Lower lobe of right lung (tissue), 2 donors: ENCODE measurements at regions of chr5 and their contacts with region 1.

Region 1: DNA sequence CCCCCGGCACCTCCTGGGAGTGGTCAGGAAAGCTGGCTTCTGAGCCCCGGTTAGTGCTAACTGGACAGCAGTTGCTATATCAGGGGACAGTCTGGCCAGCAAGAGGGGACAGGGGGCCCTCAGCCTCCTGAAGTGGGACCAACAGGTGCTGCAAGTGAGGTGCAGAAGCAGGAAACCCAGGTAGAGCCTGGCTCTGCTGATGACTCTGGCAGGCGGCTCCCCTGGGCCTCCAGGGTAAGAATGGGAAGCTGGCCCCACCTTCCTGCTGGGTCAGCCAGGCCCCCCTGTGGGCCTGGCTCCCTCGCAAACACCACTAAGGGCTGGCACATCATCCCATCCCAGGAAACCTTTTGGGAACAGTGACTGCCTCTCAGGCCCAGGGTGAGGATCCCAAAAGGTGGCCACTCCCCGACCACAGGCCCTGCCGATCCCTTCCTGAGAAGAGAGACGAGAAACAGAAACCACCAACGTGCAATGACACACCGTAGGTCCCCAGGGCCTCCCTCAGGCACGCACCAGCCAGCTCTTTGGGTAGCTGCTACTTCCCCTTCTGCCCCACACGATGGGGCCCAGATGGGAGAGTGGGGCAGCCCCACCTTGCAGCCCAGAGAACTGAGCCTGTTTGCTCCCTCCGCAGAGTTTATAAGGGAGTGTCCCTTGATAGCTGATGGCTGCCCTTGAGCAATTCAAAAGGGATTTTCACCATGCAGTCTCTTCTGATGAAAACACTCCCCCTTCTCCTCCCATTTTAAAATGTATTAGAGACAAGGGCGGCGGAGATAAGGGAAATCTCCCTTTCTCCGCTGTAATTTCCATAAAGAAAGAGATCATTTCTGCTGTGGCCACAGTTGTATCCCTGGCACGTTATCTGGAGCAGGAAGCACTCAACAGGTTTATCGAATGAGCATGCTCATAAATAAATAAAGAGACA is 76.8 kb downstream of the STK10 start:
- DNase-seq: peak; percentile 78
- ATAC-seq: peak; percentile 63 to 77
- H3K4me3 ChIP-seq: peak overlapping the region; percentile 36
- H3K27ac ChIP-seq: peak overlapping the region; percentile 76
- H3K4me1 ChIP-seq: peaks cover 82% of the 10 kb centered on the region
- H3K27me3 ChIP-seq: no peaks in the 10 kb centered on the region
- CTCF ChIP-seq: no peak

Region 2: DNA sequence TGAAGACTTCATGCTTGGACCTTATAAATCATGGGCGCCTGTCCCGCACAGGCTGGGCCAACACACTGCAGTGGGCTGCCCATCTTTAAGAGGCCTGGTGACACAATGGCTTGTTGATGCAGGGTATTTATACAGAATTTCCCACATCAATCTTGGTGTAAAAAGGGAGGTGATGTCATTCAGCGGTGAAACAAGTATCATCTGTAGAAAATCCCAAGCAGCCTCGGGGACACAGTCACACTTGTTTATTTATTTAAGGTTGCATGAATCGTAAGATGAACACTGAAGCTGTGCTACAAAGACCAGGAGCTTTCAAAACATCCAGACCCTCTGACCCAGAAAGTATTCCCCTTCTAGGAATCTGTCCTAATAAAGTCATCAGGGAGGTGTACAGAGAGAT is 285.1 kb before region 1 on chr5:
- intact Hi-C with region 1: no loop called
- DNase-seq: no peak
- ATAC-seq: no peak
- H3K4me3 ChIP-seq: no peak overlapping the region
- H3K27ac ChIP-seq: no peak overlapping the region
- H3K4me1 ChIP-seq: no peaks in the 10 kb centered on the region
- H3K27me3 ChIP-seq: no peaks in the 10 kb centered on the region
- CTCF ChIP-seq: no peak

Region 3: GRCh38 chr5:172179361-172179989 is 68.3 kb after region 1 on chr5:
- intact Hi-C with region 1: loop called (anchors 10 kb)
- DNase-seq: no peak
- ATAC-seq: peak; percentile 36 to 40
- H3K4me3 ChIP-seq: peak overlapping the region; percentile 21
- H3K27ac ChIP-seq: peak overlapping the region; percentile 60
- H3K4me1 ChIP-seq: peaks cover 81% of the 10 kb centered on the region
- H3K27me3 ChIP-seq: no peaks in the 10 kb centered on the region
- CTCF ChIP-seq: no peak